ENCODE measurements at regions of chr15 and their contacts with region 1.

Region 1: DNA sequence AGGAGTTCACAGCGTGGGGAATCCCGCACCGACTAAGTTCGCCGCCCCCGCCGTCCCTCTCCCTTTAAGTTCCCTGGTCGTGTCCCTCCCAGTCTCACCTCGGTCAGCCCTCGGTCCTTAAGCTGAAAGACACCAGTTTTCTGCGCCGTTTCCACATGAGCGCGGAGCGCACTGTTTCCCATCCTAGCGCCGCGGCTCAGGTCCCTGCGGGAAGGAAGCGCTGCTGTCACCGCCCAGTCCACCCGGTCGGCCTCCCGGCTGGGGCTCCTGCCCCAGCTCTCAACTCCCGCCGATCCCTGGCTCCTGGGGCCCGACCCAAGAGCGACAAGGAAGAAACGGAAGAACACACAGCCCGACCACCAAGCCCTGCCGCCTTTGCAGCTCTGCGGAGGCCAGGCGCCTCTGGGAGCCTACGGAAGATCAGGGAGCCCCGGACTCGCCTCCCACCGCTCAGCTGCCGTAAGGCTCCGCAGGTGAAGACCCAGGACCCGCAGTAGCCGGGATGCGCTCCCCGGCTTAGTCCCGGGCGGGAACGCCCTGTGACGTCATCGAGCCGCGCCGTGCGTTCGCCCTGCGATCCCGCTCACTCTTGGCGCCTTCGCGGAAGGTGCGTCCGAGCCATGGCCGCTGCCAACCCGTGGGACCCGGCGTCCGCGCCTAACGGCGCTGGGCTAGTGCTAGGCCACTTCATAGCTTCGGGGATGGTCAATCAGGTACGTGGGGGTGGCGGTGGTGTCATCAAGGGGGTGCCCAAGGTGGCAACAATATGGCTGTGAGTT is at the starts of genes HAUS2 and LRRC57:
- DNase-seq: peak; percentile 93
- ATAC-seq: peak; percentile 97
- total RNA-seq, gene HAUS2: 11.7 to 14.9 TPM
- total RNA-seq, gene LRRC57: 13.8 to 15.6 TPM

Region 2: DNA sequence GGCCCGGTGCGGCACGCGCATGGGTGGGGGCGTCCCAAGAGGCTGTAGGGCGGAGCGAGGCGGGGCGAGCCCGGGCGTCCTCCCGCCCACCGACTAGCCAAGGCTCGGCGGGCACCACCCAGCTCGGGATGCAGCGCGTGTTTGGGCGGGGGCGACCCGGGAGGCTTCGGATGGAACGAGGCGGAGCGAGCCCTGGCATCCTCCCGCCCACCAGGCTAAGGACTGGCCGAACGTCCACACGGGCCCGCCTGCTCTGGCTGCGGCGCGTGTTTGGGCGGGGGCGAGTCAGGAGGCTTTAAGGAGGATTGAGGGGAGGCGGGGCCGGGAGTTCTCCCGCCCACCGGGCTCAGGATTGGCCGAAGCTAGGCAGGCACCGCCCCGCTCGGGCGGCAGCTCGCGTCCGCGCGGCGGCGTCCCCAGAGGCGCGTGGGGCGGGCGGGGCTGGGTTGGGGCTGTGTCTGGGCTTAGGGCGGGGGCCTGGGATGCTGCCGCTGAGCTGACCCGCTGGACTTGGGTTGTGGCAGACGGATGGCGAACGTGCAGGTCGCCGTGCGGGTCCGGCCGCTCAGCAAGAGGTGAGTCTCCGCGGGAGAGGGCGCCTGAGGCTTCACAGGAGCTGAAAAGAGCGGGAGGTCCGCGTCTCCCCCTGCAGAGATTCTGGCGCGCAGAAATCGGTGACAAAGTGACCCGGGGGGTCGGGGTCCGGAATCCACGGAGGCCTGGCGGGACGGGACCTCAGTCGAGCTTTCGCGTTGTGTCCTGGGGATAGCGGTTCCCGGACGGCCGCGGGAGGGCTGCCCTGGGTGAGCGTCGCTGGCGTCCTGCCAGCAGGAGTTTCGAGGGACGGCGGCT is 27.0 kb after region 1 on chr15 and contains the start of gene STARD9:
- intact Hi-C with region 1: loop called in 1 of 2 experiments (anchors 2 kb)
- DNase-seq: peak; percentile 99
- ATAC-seq: peak; percentile 96 to 97
- total RNA-seq, gene STARD9: 7.1 to 10.9 TPM

Region 3: GRCh38 chr15:42650208-42651066 is 102.0 kb after region 1 on chr15:
- intact Hi-C with region 1: loop called (anchors 1 to 10 kb)
- DNase-seq: peak; percentile 55
- ATAC-seq: peak; percentile 95 to 98

Region 4: GRCh38 chr15:42736793-42737528 is 188.5 kb after region 1 on chr15 and contains the start of gene CDAN1:
- intact Hi-C with region 1: no loop called
- DNase-seq: peak; percentile 94
- ATAC-seq: peak; percentile 97 to 98
- total RNA-seq, gene CDAN1: 5.1 to 6.6 TPM